HCT116 (cell line): ENCODE measurements at regions of chr1 and their contacts with region 1.

Region 1: DNA sequence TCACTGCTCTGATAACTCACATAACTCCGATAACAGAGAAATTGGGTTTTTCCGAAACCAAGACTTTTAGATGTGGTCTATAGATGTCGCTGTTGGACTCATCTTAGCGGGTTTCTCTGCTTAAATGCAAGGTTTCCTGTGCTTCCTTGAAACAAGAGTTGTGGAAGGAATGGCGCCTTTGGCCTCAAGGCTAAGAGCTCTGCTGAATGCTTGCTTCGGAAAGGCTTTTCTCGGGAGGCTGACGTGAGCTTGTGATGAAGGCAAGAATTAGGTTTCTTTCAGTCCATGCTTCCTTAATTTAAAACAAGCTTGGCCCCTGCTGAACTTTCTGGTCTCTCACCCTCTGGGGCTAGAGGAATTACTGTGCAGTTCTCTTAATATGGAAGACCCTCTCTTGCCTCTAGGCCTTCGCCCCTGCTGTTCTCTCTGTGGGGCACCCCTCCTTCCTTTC is 113.5 kb downstream of the MAP3K21 start:
- DNase-seq: peak; percentile 71
- ATAC-seq: peak; percentile 83
- H3K4me3 ChIP-seq: no peak overlapping the region
- H3K27ac ChIP-seq: no peak overlapping the region
- H3K4me1 ChIP-seq: peaks cover 0 to 14% of the 10 kb centered on the region in 2 experiments; a peak in 2 of 4 replicates
- H3K27me3 ChIP-seq: no peaks in the 10 kb centered on the region
- CTCF ChIP-seq: peak; percentile 69 to 81 (median 78)
- POLR2A ChIP-seq: no peak
- RAD21 ChIP-seq: peak; percentile 95

Region 2: DNA sequence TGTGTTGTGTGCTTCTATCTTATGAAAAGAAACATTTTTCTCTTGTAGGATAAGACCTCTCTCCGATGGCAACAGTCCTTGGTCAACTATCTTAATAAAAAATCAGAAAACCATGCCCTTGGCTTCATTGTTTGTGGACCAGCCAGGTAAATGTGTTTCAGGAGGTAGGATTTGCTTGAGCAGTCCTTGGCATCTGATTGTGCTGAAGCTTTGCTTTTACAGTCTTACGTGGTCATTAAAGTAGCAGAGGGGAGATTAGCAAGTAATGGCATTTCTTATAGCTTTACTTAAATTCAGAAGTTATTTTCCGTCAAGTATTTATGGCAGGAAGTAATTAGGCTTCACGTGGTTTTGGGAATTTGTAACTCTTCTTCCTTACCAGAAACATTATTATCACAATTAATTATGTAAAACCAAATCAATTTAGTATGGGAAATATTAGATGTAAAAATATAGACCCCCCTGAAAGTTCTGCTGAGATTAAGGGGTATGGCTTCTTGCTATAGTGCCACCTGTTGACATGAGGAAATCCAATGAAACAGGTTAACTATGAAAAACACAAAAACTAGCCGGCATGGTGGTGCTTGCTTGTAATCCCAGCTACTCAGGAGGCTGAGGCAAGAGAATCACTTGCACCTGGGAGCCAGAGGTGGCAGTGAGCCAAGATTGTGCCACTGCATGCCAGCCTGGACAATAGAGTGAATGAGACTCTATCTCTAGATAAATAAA is 64.4 kb before region 1 on chr1:
- CTCF ChIA-PET with region 1: no interaction called
- POLR2A ChIA-PET with region 1: no interaction called
- RAD21 ChIA-PET with region 1: no interaction called
- intact Hi-C with region 1: no loop called
- DNase-seq: no peak
- ATAC-seq: no peak
- H3K4me3 ChIP-seq: no peak overlapping the region
- H3K27ac ChIP-seq: no peak overlapping the region
- H3K4me1 ChIP-seq: no peaks in the 10 kb centered on the region
- H3K27me3 ChIP-seq: no peaks in the 10 kb centered on the region
- CTCF ChIP-seq: peak in 2 of 3 experiments; percentile 24 to 26; a peak in 2 of 6 replicates
- POLR2A ChIP-seq: no peak
- RAD21 ChIP-seq: 0 out of 2 replicates have a peak, but pooled peaks have one; percentile 5

Region 3: GRCh38 chr1:233518349-233518748 is 77.4 kb after region 1 on chr1:
- CTCF ChIA-PET with region 1: interaction called, 10 read pairs
- POLR2A ChIA-PET with region 1: no interaction called
- RAD21 ChIA-PET with region 1: interaction called in 1 of 2 experiments, 3 read pairs
- intact Hi-C with region 1: no loop called
- DNase-seq: peak; percentile 65
- ATAC-seq: peak; percentile 78
- H3K4me3 ChIP-seq: peak overlapping the region; percentile 8 to 32; a peak in 1 of 4 replicates
- H3K27ac ChIP-seq: no peak overlapping the region
- H3K4me1 ChIP-seq: peaks cover 4 to 24% of the 10 kb centered on the region in 2 experiments; a peak in 2 of 4 replicates
- H3K27me3 ChIP-seq: no peaks in the 10 kb centered on the region
- CTCF ChIP-seq: peak; percentile 86 to 93 (median 90)
- POLR2A ChIP-seq: peak; percentile 40
- RAD21 ChIP-seq: peak; percentile 82

Region 4: DNA sequence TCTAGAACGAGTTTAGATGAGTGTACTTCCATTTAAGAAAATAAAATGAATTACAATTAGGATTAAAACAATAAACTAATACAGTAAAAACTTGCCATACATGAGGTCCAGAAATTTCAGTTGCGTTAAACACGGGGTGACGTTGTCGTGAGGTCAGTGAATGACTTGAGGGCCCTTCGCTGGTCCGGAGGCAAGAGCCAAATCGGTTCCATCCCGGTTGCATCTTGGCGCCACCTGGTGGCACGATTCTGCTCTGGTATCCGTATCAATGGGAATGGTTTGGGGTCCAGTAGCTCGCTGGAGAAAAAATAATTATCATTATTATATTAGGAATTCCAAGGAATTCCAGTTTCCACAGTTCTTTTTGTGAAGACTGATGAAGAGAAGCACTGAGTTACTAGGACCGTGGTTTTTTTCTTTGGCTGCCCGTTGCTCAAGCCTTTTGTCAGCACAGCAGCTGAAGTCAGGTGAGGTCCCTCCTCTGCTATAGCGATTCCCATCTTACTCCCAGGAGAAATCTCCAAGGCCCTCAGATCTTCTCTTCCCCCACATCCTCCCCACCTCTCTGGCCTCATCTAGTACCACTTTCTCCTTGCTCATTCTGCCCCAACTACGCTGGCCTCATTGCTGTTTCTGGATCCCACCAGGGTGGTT is 624.9 kb after region 1 on chr1:
- CTCF ChIA-PET with region 1: interaction called, 10 read pairs
- POLR2A ChIA-PET with region 1: no interaction called
- RAD21 ChIA-PET with region 1: interaction called in 1 of 2 experiments, 4 read pairs
- intact Hi-C with region 1: loop called (anchors 1 kb)
- DNase-seq: peak; percentile 58
- ATAC-seq: peak; percentile 97
- H3K4me3 ChIP-seq: no peak overlapping the region
- H3K27ac ChIP-seq: no peak overlapping the region
- H3K4me1 ChIP-seq: no peaks in the 10 kb centered on the region
- H3K27me3 ChIP-seq: no peaks in the 10 kb centered on the region
- CTCF ChIP-seq: peak; percentile 75 to 81 (median 76)
- POLR2A ChIP-seq: no peak
- RAD21 ChIP-seq: peak; percentile 91